ENCODE measurements at regions of chr5 and their contacts with region 1.

Region 1: GRCh38 chr5:141878711-141879425 is 658 bp upstream of the PCDH1 start:
- DNase-seq: peak; percentile 94
- ATAC-seq: peak; percentile 84
- H3K4me3 ChIP-seq: peak overlapping the region in 4 of 5 experiments; percentile 34 to 65 (median 54)
- H3K4me3 Mint-ChIP-seq: peak overlapping the region; percentile 89
- H3K27ac ChIP-seq: no peak overlapping the region
- H3K27ac Mint-ChIP-seq: peak overlapping the region; percentile 46
- H3K4me1 ChIP-seq: peaks cover 39 to 43% of the 10 kb centered on the region in 2 donors
- H3K4me1 Mint-ChIP-seq: peaks cover 31% of the 10 kb centered on the region
- H3K27me3 ChIP-seq: peaks cover 0 to 88% (median 54%) of the 10 kb centered on the region in 4 experiments
- H3K27me3 Mint-ChIP-seq: peaks cover 72% of the 10 kb centered on the region
- CTCF ChIP-seq: peak; percentile 96

Region 2: DNA sequence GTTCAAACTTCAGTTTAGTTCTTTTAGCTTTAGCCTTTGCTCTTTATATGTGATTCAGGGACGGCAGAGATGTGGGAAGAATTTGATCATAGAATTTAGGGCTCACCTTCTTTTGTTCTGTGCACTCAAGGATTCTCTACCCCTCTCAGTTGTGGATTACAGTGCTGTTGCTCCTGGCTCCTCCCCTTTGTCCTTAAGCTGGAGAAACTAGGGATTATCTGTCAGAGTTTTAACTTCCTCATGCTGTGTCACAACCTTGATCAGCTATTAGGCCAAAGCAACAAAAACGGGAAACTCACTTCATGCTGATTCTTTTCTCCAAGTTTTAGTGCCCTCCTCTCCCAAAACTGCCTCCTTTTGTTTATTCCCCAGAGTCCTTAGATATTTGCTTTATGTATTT is 925.6 kb before region 1 on chr5:
- CTCF ChIA-PET with region 1: no interaction called
- POLR2A ChIA-PET with region 1: no interaction called
- intact Hi-C with region 1: no loop called
- DNase-seq: no peak
- ATAC-seq: no peak
- H3K4me3 ChIP-seq: no peak overlapping the region
- H3K4me3 Mint-ChIP-seq: no peak overlapping the region
- H3K27ac ChIP-seq: no peak overlapping the region
- H3K27ac Mint-ChIP-seq: no peak overlapping the region
- H3K4me1 ChIP-seq: no peaks in the 10 kb centered on the region
- H3K4me1 Mint-ChIP-seq: no peaks in the 10 kb centered on the region
- H3K27me3 ChIP-seq: no peaks in the 10 kb centered on the region
- H3K27me3 Mint-ChIP-seq: no peaks in the 10 kb centered on the region
- CTCF ChIP-seq: no peak

Region 3: DNA sequence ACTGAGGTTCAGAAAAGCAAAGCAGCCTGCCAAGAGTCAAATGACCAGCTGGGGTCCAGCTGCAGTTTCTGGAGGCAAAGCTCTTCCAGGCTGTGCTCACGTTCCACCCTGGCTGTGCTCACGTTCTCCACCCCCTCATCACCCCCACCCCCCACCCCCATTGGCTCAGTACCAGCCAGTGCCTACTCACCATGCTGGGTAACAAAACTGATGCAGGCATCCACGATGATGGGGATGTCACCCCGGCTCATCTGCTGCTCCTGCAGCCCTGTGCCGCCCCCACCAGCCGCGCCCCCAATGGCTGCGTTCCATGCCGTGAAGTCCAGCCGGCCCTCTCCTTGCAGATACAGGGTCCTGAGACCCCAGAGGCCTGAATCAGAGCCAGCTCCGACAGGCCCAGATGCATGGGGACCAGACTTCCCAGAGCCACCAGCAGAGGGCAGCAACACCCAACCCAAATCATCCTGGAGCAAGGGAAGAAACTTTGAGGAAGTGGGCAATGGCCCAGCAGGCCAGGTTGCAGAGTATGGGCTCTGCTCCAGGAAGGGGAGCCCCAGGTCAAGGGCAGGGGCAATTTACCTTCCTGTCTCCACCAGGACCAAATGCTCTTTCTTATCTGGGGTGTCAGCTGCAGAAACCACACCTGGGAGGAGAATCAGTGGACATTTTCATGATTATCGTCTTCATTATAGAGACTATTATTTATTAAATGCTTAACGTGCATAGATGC is 214.0 kb before region 1 on chr5:
- CTCF ChIA-PET with region 1: interaction called, 48 read pairs
- POLR2A ChIA-PET with region 1: interaction called, 3 read pairs
- intact Hi-C with region 1: loop called (anchors 1 kb)
- DNase-seq: peak; percentile 85
- ATAC-seq: peak; percentile 98
- H3K4me3 ChIP-seq: no peak overlapping the region
- H3K4me3 Mint-ChIP-seq: no peak overlapping the region
- H3K27ac ChIP-seq: no peak overlapping the region
- H3K27ac Mint-ChIP-seq: no peak overlapping the region
- H3K4me1 ChIP-seq: peaks cover 4 to 6% of the 10 kb centered on the region in 2 donors
- H3K4me1 Mint-ChIP-seq: peaks cover 4% of the 10 kb centered on the region
- H3K27me3 ChIP-seq: peaks cover 0 to 4% (median 0%) of the 10 kb centered on the region in 4 experiments
- H3K27me3 Mint-ChIP-seq: peaks cover 5% of the 10 kb centered on the region
- CTCF ChIP-seq: peak; percentile 91

Region 4: GRCh38 chr5:141701360-141702119 is 177.3 kb before region 1 on chr5:
- CTCF ChIA-PET with region 1: interaction called, 103 read pairs
- POLR2A ChIA-PET with region 1: no interaction called
- intact Hi-C with region 1: loop called (anchors 1 kb)
- DNase-seq: no peak
- ATAC-seq: peak; percentile 23
- H3K4me3 ChIP-seq: peak overlapping the region in 4 of 5 experiments; percentile 56 to 72 (median 63)
- H3K4me3 Mint-ChIP-seq: no peak overlapping the region
- H3K27ac ChIP-seq: no peak overlapping the region
- H3K27ac Mint-ChIP-seq: no peak overlapping the region
- H3K4me1 ChIP-seq: peaks cover 22 to 36% of the 10 kb centered on the region in 2 donors
- H3K4me1 Mint-ChIP-seq: peaks cover 23% of the 10 kb centered on the region
- H3K27me3 ChIP-seq: peaks cover 0 to 72% (median 58%) of the 10 kb centered on the region in 4 experiments
- H3K27me3 Mint-ChIP-seq: peaks cover 49% of the 10 kb centered on the region
- CTCF ChIP-seq: no peak

Region 5: GRCh38 chr5:141825791-141826560 is 52.9 kb before region 1 on chr5:
- CTCF ChIA-PET with region 1: interaction called, 10 read pairs
- POLR2A ChIA-PET with region 1: no interaction called
- intact Hi-C with region 1: no loop called
- DNase-seq: peak; percentile 19
- ATAC-seq: no peak
- H3K4me3 ChIP-seq: no peak overlapping the region
- H3K4me3 Mint-ChIP-seq: no peak overlapping the region
- H3K27ac ChIP-seq: no peak overlapping the region
- H3K27ac Mint-ChIP-seq: no peak overlapping the region
- H3K4me1 ChIP-seq: no peaks in the 10 kb centered on the region
- H3K4me1 Mint-ChIP-seq: no peaks in the 10 kb centered on the region
- H3K27me3 ChIP-seq: no peaks in the 10 kb centered on the region
- H3K27me3 Mint-ChIP-seq: peaks cover 36% of the 10 kb centered on the region
- CTCF ChIP-seq: peak; percentile 24

Region 6: DNA sequence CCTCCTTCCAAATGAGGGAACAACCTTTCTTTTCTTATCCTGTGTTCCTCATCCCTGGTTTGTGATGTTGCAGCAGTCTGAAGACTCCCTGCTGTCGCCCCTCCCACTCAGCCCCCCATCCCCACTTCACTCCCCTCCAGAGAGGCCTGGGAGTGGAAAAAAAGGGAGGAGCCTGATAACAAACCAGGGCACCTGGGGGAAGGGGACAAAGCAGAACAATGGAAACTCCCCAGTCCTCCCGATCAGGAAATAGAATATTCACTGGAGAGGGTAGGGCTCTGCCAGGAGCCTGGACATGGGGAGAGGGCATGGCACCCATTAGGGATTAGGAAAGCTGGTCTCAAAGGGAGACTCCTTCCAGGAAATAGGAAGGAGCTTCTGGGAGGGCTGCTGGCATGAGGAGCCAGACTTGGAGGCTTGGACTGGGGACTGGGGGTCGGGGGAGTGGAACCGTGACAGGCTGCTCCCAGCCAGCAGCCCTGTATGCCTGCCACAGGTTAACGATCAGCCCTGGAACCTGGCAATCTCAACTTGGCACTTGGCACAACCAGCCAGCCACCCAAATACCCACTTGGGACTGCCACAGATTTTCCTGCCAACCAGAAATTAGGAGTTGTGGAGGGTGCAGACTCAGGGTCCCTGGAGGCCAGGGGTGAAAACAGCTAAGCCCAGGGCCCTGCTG is 20.6 kb before region 1 on chr5:
- CTCF ChIA-PET with region 1: interaction called, 10 read pairs
- POLR2A ChIA-PET with region 1: no interaction called
- intact Hi-C with region 1: no loop called
- DNase-seq: no peak
- ATAC-seq: no peak
- H3K4me3 ChIP-seq: no peak overlapping the region
- H3K4me3 Mint-ChIP-seq: no peak overlapping the region
- H3K27ac ChIP-seq: no peak overlapping the region
- H3K27ac Mint-ChIP-seq: no peak overlapping the region
- H3K4me1 ChIP-seq: no peaks in the 10 kb centered on the region
- H3K4me1 Mint-ChIP-seq: no peaks in the 10 kb centered on the region
- H3K27me3 ChIP-seq: peaks cover 0 to 4% (median under 1%) of the 10 kb centered on the region in 4 experiments
- H3K27me3 Mint-ChIP-seq: peaks cover 30% of the 10 kb centered on the region
- CTCF ChIP-seq: no peak

Region 7: DNA sequence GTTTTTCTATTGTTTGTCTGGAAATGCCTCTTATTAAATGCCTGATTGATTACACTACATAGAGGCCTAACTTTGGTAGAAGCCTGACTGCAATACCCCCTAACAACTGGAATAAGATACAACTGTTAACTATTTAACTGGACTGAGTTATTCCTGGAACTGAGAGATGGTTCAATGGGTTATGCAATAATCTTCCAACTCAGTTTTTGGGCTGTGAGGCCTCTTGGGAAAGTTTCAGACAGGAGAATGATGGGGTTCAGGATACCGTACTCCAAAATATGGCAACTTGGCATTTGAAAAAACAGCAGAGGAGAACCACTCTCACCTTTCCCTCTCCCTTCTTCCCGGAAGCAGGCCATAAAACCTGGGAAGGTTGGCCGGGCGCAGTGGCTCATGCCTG is 18.6 kb after region 1 on chr5:
- CTCF ChIA-PET with region 1: interaction called, 49 read pairs
- POLR2A ChIA-PET with region 1: no interaction called
- intact Hi-C with region 1: no loop called
- DNase-seq: no peak
- ATAC-seq: no peak
- H3K4me3 ChIP-seq: no peak overlapping the region
- H3K4me3 Mint-ChIP-seq: no peak overlapping the region
- H3K27ac ChIP-seq: no peak overlapping the region
- H3K27ac Mint-ChIP-seq: no peak overlapping the region
- H3K4me1 ChIP-seq: no peaks in the 10 kb centered on the region
- H3K4me1 Mint-ChIP-seq: no peaks in the 10 kb centered on the region
- H3K27me3 ChIP-seq: peaks cover 0 to 4% (median 0%) of the 10 kb centered on the region in 4 experiments
- H3K27me3 Mint-ChIP-seq: peaks cover 35% of the 10 kb centered on the region
- CTCF ChIP-seq: no peak

Region 8: DNA sequence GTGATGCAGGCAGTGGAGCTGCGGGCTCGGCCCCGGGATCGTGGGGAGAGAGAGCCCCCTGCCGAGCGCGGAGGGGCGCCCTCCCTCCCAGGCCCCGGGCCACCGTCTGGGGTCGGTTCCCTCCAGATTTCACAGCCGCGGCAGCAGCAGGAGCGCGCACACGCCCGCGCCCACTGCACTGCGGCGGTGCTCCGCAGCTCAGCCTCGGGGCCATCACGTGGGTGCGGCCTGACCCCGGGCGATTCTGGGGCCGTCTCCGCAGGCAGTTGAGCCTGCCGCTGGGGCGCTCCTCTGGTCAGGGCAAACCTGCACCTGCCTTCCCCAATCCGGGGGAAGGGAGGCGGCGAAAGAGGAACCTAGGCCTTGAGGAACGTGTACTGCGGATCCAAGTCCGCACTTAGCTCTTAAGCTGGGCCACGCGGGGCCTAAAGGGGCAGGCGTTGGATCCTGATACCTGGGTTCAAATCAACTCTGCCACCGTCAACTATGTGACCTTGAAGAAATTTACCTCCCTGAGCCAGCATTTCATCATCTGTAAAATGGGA is 35.4 kb after region 1 on chr5:
- CTCF ChIA-PET with region 1: interaction called, 11 read pairs
- POLR2A ChIA-PET with region 1: no interaction called
- intact Hi-C with region 1: no loop called
- DNase-seq: peak; percentile 70
- ATAC-seq: peak; percentile 90
- H3K4me3 ChIP-seq: peak overlapping the region; percentile 32 to 56 (median 50)
- H3K4me3 Mint-ChIP-seq: peak overlapping the region; percentile 66
- H3K27ac ChIP-seq: no peak overlapping the region
- H3K27ac Mint-ChIP-seq: no peak overlapping the region
- H3K4me1 ChIP-seq: peaks cover 24 to 32% of the 10 kb centered on the region in 2 donors
- H3K4me1 Mint-ChIP-seq: peaks cover 38% of the 10 kb centered on the region
- H3K27me3 ChIP-seq: peaks cover 0 to 5% (median 3%) of the 10 kb centered on the region in 4 experiments
- H3K27me3 Mint-ChIP-seq: peaks cover 8% of the 10 kb centered on the region
- CTCF ChIP-seq: peak; percentile 30